Caco-2 (cell line): ENCODE measurements at regions of chr5 and their contacts with region 1.

Region 1: GRCh38 chr5:128613766-128614165 is 75.7 kb upstream of the FBN2 start:
- DNase-seq: no peak
- H3K4me3 ChIP-seq: no peak overlapping the region
- H3K4me3 Mint-ChIP-seq: no peak overlapping the region
- H3K27ac Mint-ChIP-seq: no peak overlapping the region
- H3K4me1 ChIP-seq: no peaks in the 10 kb centered on the region
- H3K4me1 Mint-ChIP-seq: no peaks in the 10 kb centered on the region
- H3K27me3 ChIP-seq: no peaks in the 10 kb centered on the region
- H3K27me3 Mint-ChIP-seq: no peaks in the 10 kb centered on the region
- CTCF ChIP-seq: no peak

Region 2: GRCh38 chr5:128579088-128579487 is 34.7 kb before region 1 on chr5:
- CTCF ChIA-PET with region 1: no interaction called
- POLR2A ChIA-PET with region 1: no interaction called
- intact Hi-C with region 1: no loop called
- DNase-seq: no peak
- H3K4me3 ChIP-seq: no peak overlapping the region
- H3K4me3 Mint-ChIP-seq: no peak overlapping the region
- H3K27ac Mint-ChIP-seq: peak overlapping the region; percentile 77
- H3K4me1 ChIP-seq: peaks cover 18% of the 10 kb centered on the region; the same call in 1 of the 2 replicates
- H3K4me1 Mint-ChIP-seq: peaks cover 16% of the 10 kb centered on the region
- H3K27me3 ChIP-seq: no peaks in the 10 kb centered on the region
- H3K27me3 Mint-ChIP-seq: no peaks in the 10 kb centered on the region
- CTCF ChIP-seq: no peak

Region 3: DNA sequence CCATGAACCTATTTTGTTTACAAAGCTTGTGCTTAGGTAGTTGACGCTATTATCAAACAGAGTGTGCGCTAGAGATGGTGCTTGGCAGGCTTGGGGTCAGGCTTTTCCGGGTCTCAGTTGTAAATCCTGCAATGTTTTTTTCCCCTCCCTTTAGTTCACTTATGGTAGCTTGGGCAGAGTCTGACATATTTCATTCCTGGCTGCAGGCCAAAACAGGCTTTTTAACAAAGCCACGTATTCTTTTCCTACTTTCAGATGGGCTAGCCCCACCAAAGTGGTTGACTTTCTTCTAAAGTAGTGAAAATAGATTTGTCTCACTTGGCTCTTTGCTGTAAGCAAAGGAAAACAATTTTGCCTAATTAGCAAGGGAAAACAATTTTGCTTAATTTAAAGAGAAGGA is 17.7 kb before region 1 on chr5:
- CTCF ChIA-PET with region 1: no interaction called
- POLR2A ChIA-PET with region 1: no interaction called
- intact Hi-C with region 1: loop called (anchors 1 kb)
- DNase-seq: no peak
- H3K4me3 ChIP-seq: no peak overlapping the region
- H3K4me3 Mint-ChIP-seq: no peak overlapping the region
- H3K27ac Mint-ChIP-seq: no peak overlapping the region
- H3K4me1 ChIP-seq: peaks cover 13% of the 10 kb centered on the region
- H3K4me1 Mint-ChIP-seq: peaks cover 6% of the 10 kb centered on the region
- H3K27me3 ChIP-seq: no peaks in the 10 kb centered on the region
- H3K27me3 Mint-ChIP-seq: no peaks in the 10 kb centered on the region
- CTCF ChIP-seq: no peak